CD4-positive, alpha-beta T cell (primary cell): ENCODE measurements at regions of chr6 and their contacts with region 1.

Region 1: GRCh38 chr6:106300944-106301343 is 24.6 kb downstream of the ATG5 start:
- DNase-seq: peak in 3 of 14 experiments; percentile 49 to 53 (median 52)
- ATAC-seq: no peak
- H3K4me3 ChIP-seq: no peak overlapping the region
- H3K4me3 Mint-ChIP-seq: no peak overlapping the region
- H3K27ac ChIP-seq: no peak overlapping the region
- H3K27ac Mint-ChIP-seq: no peak overlapping the region
- H3K4me1 ChIP-seq: no peaks in the 10 kb centered on the region
- H3K4me1 Mint-ChIP-seq: peaks cover 40% of the 10 kb centered on the region
- H3K27me3 ChIP-seq: no peaks in the 10 kb centered on the region
- H3K27me3 Mint-ChIP-seq: no peaks in the 10 kb centered on the region
- CTCF ChIP-seq: peak; percentile 43

Region 2: GRCh38 chr6:105431226-105431625 is 869.7 kb before region 1 on chr6:
- CTCF ChIA-PET with region 1: no interaction called
- POLR2A ChIA-PET with region 1: no interaction called
- intact Hi-C with region 1: loop called (anchors 2 to 5 kb)
- DNase-seq: peak in 4 of 14 experiments; percentile 16 to 68 (median 62)
- ATAC-seq: no peak
- H3K4me3 ChIP-seq: no peak overlapping the region
- H3K4me3 Mint-ChIP-seq: no peak overlapping the region
- H3K27ac ChIP-seq: no peak overlapping the region
- H3K27ac Mint-ChIP-seq: no peak overlapping the region
- H3K4me1 ChIP-seq: no peaks in the 10 kb centered on the region
- H3K4me1 Mint-ChIP-seq: no peaks in the 10 kb centered on the region
- H3K27me3 ChIP-seq: peaks cover 0 to 5% of the 10 kb centered on the region in 2 experiments
- H3K27me3 Mint-ChIP-seq: peaks cover 10% of the 10 kb centered on the region
- CTCF ChIP-seq: peak; percentile 73

Region 3: GRCh38 chr6:105484238-105485161 is 816.4 kb before region 1 on chr6:
- CTCF ChIA-PET with region 1: no interaction called
- POLR2A ChIA-PET with region 1: no interaction called
- intact Hi-C with region 1: loop called in 1 of 2 experiments (anchors 5 kb)
- DNase-seq: peak in 3 of 14 experiments; percentile 50 to 61 (median 56)
- ATAC-seq: peak; percentile 32
- H3K4me3 ChIP-seq: no peak overlapping the region
- H3K4me3 Mint-ChIP-seq: no peak overlapping the region
- H3K27ac ChIP-seq: no peak overlapping the region
- H3K27ac Mint-ChIP-seq: no peak overlapping the region
- H3K4me1 ChIP-seq: no peaks in the 10 kb centered on the region
- H3K4me1 Mint-ChIP-seq: peaks cover 5% of the 10 kb centered on the region
- H3K27me3 ChIP-seq: no peaks in the 10 kb centered on the region
- H3K27me3 Mint-ChIP-seq: peaks cover 20% of the 10 kb centered on the region
- CTCF ChIP-seq: peak; percentile 75

Region 4: GRCh38 chr6:105587349-105588122 is 713.4 kb before region 1 on chr6:
- CTCF ChIA-PET with region 1: no interaction called
- POLR2A ChIA-PET with region 1: no interaction called
- intact Hi-C with region 1: loop called in 1 of 2 experiments (anchors 10 kb)
- DNase-seq: peak in 7 of 14 experiments; percentile 4 to 49 (median 27)
- ATAC-seq: peak; percentile 68
- H3K4me3 ChIP-seq: peak overlapping the region; percentile 24
- H3K4me3 Mint-ChIP-seq: peak overlapping the region; percentile 82
- H3K27ac ChIP-seq: peak overlapping the region in 1 of 2 donors; percentile 11
- H3K27ac Mint-ChIP-seq: peak overlapping the region; percentile 93
- H3K4me1 ChIP-seq: peaks cover 23% of the 10 kb centered on the region
- H3K4me1 Mint-ChIP-seq: peaks cover 28% of the 10 kb centered on the region
- H3K27me3 ChIP-seq: no peaks in the 10 kb centered on the region
- H3K27me3 Mint-ChIP-seq: peaks cover 4% of the 10 kb centered on the region
- CTCF ChIP-seq: no peak

Region 5: GRCh38 chr6:105733565-105734162 is 567.3 kb before region 1 on chr6:
- CTCF ChIA-PET with region 1: no interaction called
- POLR2A ChIA-PET with region 1: no interaction called
- intact Hi-C with region 1: loop called in 1 of 2 experiments (anchors 2 kb)
- DNase-seq: peak in 3 of 14 experiments; percentile 56 to 68 (median 67)
- ATAC-seq: no peak
- H3K4me3 ChIP-seq: no peak overlapping the region
- H3K4me3 Mint-ChIP-seq: no peak overlapping the region
- H3K27ac ChIP-seq: no peak overlapping the region
- H3K27ac Mint-ChIP-seq: no peak overlapping the region
- H3K4me1 ChIP-seq: no peaks in the 10 kb centered on the region
- H3K4me1 Mint-ChIP-seq: peaks cover 13% of the 10 kb centered on the region
- H3K27me3 ChIP-seq: no peaks in the 10 kb centered on the region
- H3K27me3 Mint-ChIP-seq: no peaks in the 10 kb centered on the region
- CTCF ChIP-seq: peak; percentile 84